A673 (cell line): ENCODE measurements at regions of chr11 and their contacts with region 1.

Region 1: DNA sequence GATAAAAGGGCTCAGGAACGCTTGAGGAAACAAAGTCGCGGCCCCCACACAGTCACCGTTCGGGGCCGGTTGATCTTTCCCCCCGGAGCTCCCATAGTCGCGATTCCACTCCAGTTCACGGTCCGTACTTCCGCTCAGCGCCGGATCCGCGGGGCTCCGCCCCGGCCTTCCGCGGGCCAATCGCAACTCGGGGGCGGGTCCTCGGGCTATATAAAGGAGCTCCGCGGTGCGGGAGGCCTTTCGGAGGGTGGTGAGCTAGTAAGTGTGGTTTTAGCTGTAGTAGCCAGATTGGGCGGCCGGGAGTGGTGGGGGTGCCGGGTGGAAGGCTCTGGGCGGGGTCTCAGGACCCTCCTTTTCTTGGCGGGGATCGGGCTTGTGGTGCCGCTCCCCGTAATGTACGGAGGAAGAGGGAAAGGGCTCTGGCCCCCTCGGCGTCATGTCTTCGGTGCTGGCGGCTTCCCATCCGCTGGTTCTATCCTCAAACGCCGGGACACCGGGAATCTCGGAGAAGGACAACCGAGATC is at the starts of genes C11orf98 and CSKMT:
- DNase-seq: peak; percentile 97
- H3K4me3 ChIP-seq: peak within 1 kb of the TSS; percentile 91
- H3K27ac ChIP-seq: peak within 1 kb of the TSS; percentile 88
- H3K4me1 ChIP-seq: peaks cover 15% of the 10 kb centered on the region
- H3K27me3 ChIP-seq: no peaks in the 10 kb centered on the region
- CTCF ChIP-seq: no peak
- total RNA-seq, gene C11orf98: 124 and 141 TPM in 2 replicates
- total RNA-seq, gene CSKMT: 59.7 and 68.8 TPM in 2 replicates

Region 2: GRCh38 chr11:62497132-62497915 is 167.8 kb before region 1 on chr11:
- CTCF ChIA-PET with region 1: no interaction called
- POLR2A ChIA-PET with region 1: no interaction called
- intact Hi-C with region 1: no loop called
- DNase-seq: peak; percentile 81
- H3K4me3 ChIP-seq: no peak overlapping the region
- H3K27ac ChIP-seq: no peak overlapping the region
- H3K4me1 ChIP-seq: peaks cover 10% of the 10 kb centered on the region
- H3K27me3 ChIP-seq: no peaks in the 10 kb centered on the region
- CTCF ChIP-seq: peak; percentile 68

Region 3: GRCh38 chr11:62678770-62679696 is 13.9 kb after region 1 on chr11 and contains the start of gene UBXN1:
- CTCF ChIA-PET with region 1: no interaction called
- POLR2A ChIA-PET with region 1: interaction called, 5 read pairs
- intact Hi-C with region 1: loop called (anchors 1 kb)
- DNase-seq: peak; percentile 98
- H3K4me3 ChIP-seq: peak within 1 kb of the TSS; percentile 85
- H3K27ac ChIP-seq: peak within 1 kb of the TSS; percentile 84
- H3K4me1 ChIP-seq: peaks cover 23% of the 10 kb centered on the region
- H3K27me3 ChIP-seq: no peaks in the 10 kb centered on the region
- CTCF ChIP-seq: no peak
- total RNA-seq, gene UBXN1: 143 and 147 TPM in 2 replicates

Region 4: GRCh38 chr11:62753736-62754603 is 88.8 kb after region 1 on chr11 and contains the start of gene ZBTB3:
- CTCF ChIA-PET with region 1: no interaction called
- POLR2A ChIA-PET with region 1: interaction called, 13 read pairs
- intact Hi-C with region 1: no loop called
- DNase-seq: peak; percentile 100
- H3K4me3 ChIP-seq: peak within 1 kb of the TSS; percentile 62
- H3K27ac ChIP-seq: peak within 1 kb of the TSS; percentile 88
- H3K4me1 ChIP-seq: peaks cover 6% of the 10 kb centered on the region
- H3K27me3 ChIP-seq: no peaks in the 10 kb centered on the region
- CTCF ChIP-seq: no peak
- total RNA-seq, gene ZBTB3: 12.0 and 13.1 TPM in 2 replicates

Region 5: GRCh38 chr11:62922658-62923431 is 257.7 kb after region 1 on chr11:
- CTCF ChIA-PET with region 1: no interaction called
- POLR2A ChIA-PET with region 1: interaction called, 17 read pairs
- intact Hi-C with region 1: no loop called
- DNase-seq: peak; percentile 65
- H3K4me3 ChIP-seq: peak overlapping the region; percentile 32
- H3K27ac ChIP-seq: no peak overlapping the region
- H3K4me1 ChIP-seq: peaks cover 28% of the 10 kb centered on the region
- H3K27me3 ChIP-seq: no peaks in the 10 kb centered on the region
- CTCF ChIP-seq: peak; percentile 67